GM12878 (cell line): ENCODE measurements at regions of chr2 and their contacts with region 1.

Region 1: GRCh38 chr2:44044281-44044720 is 48.5 kb upstream of the LRPPRC start:
- DNase-seq: peak; percentile 44
- ATAC-seq: peak; percentile 100
- H3K4me3 ChIP-seq: no peak overlapping the region
- H3K27ac ChIP-seq: no peak overlapping the region
- H3K4me1 ChIP-seq: peaks cover 5% of the 10 kb centered on the region
- H3K27me3 ChIP-seq: no peaks in the 10 kb centered on the region
- CTCF ChIP-seq: peak; percentile 94 to 98 (median 94); a peak in 5 of 6 replicates
- EP300 ChIP-seq: no peak; a peak in 1 of 4 replicates
- POLR2A ChIP-seq: no peak
- RAD21 ChIP-seq: peak; percentile 92

Region 2: GRCh38 chr2:43764086-43764705 is 280.1 kb before region 1 on chr2:
- CTCF ChIA-PET with region 1: no interaction called
- POLR2A ChIA-PET with region 1: no interaction called
- RAD21 ChIA-PET with region 1: no interaction called
- SMC1A ChIA-PET with region 1: no interaction called
- in situ Hi-C with region 1: no loop called
- intact Hi-C with region 1: no loop called
- DNase-seq: no peak
- ATAC-seq: no peak
- H3K4me3 ChIP-seq: no peak overlapping the region
- H3K27ac ChIP-seq: no peak overlapping the region
- H3K4me1 ChIP-seq: no peaks in the 10 kb centered on the region
- H3K27me3 ChIP-seq: no peaks in the 10 kb centered on the region
- CTCF ChIP-seq: no peak
- EP300 ChIP-seq: no peak
- POLR2A ChIP-seq: no peak
- RAD21 ChIP-seq: no peak

Region 3: GRCh38 chr2:44055229-44055628 is 10.9 kb after region 1 on chr2:
- CTCF ChIA-PET with region 1: interaction called, 14 read pairs
- POLR2A ChIA-PET with region 1: no interaction called
- RAD21 ChIA-PET with region 1: interaction called, 5 read pairs
- SMC1A ChIA-PET with region 1: interaction called, 5 read pairs
- in situ Hi-C with region 1: no loop called
- intact Hi-C with region 1: no loop called
- DNase-seq: no peak
- ATAC-seq: no peak
- H3K4me3 ChIP-seq: no peak overlapping the region
- H3K27ac ChIP-seq: no peak overlapping the region
- H3K4me1 ChIP-seq: no peaks in the 10 kb centered on the region
- H3K27me3 ChIP-seq: no peaks in the 10 kb centered on the region; a peak in 1 of 4 replicates
- CTCF ChIP-seq: no peak
- EP300 ChIP-seq: no peak
- POLR2A ChIP-seq: no peak
- RAD21 ChIP-seq: no peak

Region 4: GRCh38 chr2:44291281-44292248 is 247.3 kb after region 1 on chr2:
- CTCF ChIA-PET with region 1: interaction called, 5 read pairs
- POLR2A ChIA-PET with region 1: no interaction called
- RAD21 ChIA-PET with region 1: interaction called, 3 read pairs
- SMC1A ChIA-PET with region 1: interaction called, 5 read pairs
- in situ Hi-C with region 1: no loop called
- intact Hi-C with region 1: loop called (anchors 5 kb)
- DNase-seq: no peak
- ATAC-seq: peak; percentile 71
- H3K4me3 ChIP-seq: no peak overlapping the region
- H3K27ac ChIP-seq: no peak overlapping the region
- H3K4me1 ChIP-seq: no peaks in the 10 kb centered on the region
- H3K27me3 ChIP-seq: no peaks in the 10 kb centered on the region; a peak in 1 of 4 replicates
- CTCF ChIP-seq: peak; percentile 8 to 51 (median 37); a peak in 3 of 6 replicates
- EP300 ChIP-seq: no peak
- POLR2A ChIP-seq: no peak
- RAD21 ChIP-seq: peak; percentile 45

Region 5: DNA sequence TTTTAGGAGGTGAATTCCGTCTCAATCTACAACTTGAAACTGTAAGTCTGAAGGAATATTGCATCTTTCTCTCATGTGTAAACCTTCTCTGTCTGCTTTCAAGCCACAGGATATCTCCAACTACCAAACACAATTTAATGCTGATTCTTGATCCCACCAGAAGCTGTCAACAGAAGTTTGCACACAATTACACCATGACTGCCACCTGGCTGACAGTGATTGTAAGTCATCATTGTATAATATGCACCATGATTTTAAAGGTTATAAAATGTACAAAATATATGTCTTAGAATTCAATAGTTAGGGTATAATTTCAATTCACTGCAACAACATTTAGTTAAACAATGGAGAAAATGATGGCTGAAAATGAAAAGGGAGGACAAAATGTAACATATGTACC is 298.6 kb after region 1 on chr2:
- CTCF ChIA-PET with region 1: interaction called, 8 read pairs
- POLR2A ChIA-PET with region 1: no interaction called
- RAD21 ChIA-PET with region 1: interaction called, 8 read pairs
- SMC1A ChIA-PET with region 1: interaction called, 7 read pairs
- in situ Hi-C with region 1: no loop called
- intact Hi-C with region 1: loop called (anchors 1 kb)
- DNase-seq: no peak
- ATAC-seq: peak; percentile 66; the same call in 2 of the 3 replicates
- H3K4me3 ChIP-seq: no peak overlapping the region
- H3K27ac ChIP-seq: no peak overlapping the region
- H3K4me1 ChIP-seq: no peaks in the 10 kb centered on the region
- H3K27me3 ChIP-seq: no peaks in the 10 kb centered on the region
- CTCF ChIP-seq: peak; percentile 20 to 54 (median 39); a peak in 5 of 6 replicates
- EP300 ChIP-seq: no peak
- POLR2A ChIP-seq: no peak
- RAD21 ChIP-seq: peak; percentile 64